MCF 10A (cell line): ENCODE measurements at regions of chr6 and their contacts with region 1.

Region 1: GRCh38 chr6:113858480-113859348 is 1.6 kb downstream of the MARCKS start:
- DNase-seq: peak; percentile 90
- H3K4me3 Mint-ChIP-seq: no peak overlapping the region
- H3K27ac Mint-ChIP-seq: no peak overlapping the region
- H3K4me1 Mint-ChIP-seq: peaks cover 6% of the 10 kb centered on the region
- H3K27me3 Mint-ChIP-seq: no peaks in the 10 kb centered on the region
- CTCF ChIP-seq: peak; percentile 98

Region 2: DNA sequence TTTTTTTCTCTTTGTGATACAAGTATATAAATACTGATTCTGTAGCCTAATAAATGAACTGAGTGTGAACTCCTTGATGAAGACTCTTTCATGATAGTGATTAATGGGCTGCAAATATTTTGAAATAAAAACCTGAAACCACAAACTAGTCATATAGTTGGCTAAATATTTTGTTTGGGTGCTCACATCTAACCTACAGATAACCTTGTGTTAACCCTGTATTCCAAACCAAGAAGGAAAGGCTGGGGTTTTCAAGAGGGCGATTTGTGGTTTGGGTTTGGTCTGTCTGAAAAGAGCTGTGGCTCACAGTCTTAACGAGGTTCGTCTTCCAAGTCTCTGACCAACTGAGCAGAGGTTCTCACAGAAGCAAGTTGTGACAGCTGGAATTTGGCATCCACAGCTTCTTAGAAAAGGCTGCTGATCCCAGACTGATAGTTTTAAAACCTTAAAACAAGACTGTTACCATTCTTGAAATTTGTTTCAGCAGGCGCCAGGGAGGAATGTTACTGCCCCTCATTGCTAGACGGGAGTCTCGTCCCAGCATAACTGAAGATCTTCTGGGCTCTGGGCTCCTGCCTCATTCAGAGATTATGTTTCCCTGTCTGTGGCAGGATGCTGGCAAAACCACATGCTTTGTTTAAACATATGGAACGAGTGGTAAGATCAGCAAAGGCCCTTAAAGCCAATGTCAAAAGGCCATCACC is 738.0 kb before region 1 on chr6:
- CTCF ChIA-PET with region 1: interaction called, 3 read pairs
- POLR2A ChIA-PET with region 1: no interaction called
- intact Hi-C with region 1: loop called (anchors 1 kb)
- DNase-seq: peak; percentile 89
- H3K4me3 Mint-ChIP-seq: peak overlapping the region; percentile 29
- H3K27ac Mint-ChIP-seq: no peak overlapping the region
- H3K4me1 Mint-ChIP-seq: peaks cover 18% of the 10 kb centered on the region
- H3K27me3 Mint-ChIP-seq: no peaks in the 10 kb centered on the region
- CTCF ChIP-seq: no peak

Region 3: DNA sequence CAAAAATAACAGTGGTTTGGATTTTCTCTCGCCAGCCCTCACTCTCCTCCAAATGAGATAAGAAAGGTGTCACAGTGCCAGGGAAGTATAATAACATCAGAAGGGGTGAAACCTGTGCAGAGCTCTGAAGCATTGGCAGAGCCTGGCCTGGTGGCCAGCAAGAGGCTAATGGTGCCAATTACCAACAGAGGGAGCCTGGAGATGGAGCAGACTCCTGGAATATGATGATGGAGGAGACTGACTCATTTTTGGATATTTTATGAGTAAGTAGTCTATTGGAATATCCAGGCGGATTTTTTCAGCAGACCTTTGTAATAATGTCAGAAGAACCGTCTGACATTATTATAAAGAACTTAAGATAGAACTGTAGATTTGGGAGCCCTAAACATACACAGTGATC is 444.2 kb before region 1 on chr6:
- CTCF ChIA-PET with region 1: interaction called, 13 read pairs
- POLR2A ChIA-PET with region 1: interaction called, 16 read pairs
- intact Hi-C with region 1: loop called (anchors 1 kb)
- DNase-seq: peak; percentile 79
- H3K4me3 Mint-ChIP-seq: no peak overlapping the region
- H3K27ac Mint-ChIP-seq: no peak overlapping the region
- H3K4me1 Mint-ChIP-seq: peaks cover 22% of the 10 kb centered on the region
- H3K27me3 Mint-ChIP-seq: no peaks in the 10 kb centered on the region
- CTCF ChIP-seq: peak; percentile 53

Region 4: GRCh38 chr6:113447088-113447831 is 411.5 kb before region 1 on chr6:
- CTCF ChIA-PET with region 1: interaction called, 3 read pairs
- POLR2A ChIA-PET with region 1: interaction called, 16 read pairs
- intact Hi-C with region 1: no loop called
- DNase-seq: peak; percentile 88
- H3K4me3 Mint-ChIP-seq: no peak overlapping the region
- H3K27ac Mint-ChIP-seq: peak overlapping the region; percentile 88
- H3K4me1 Mint-ChIP-seq: peaks cover 41% of the 10 kb centered on the region
- H3K27me3 Mint-ChIP-seq: no peaks in the 10 kb centered on the region
- CTCF ChIP-seq: no peak

Region 5: DNA sequence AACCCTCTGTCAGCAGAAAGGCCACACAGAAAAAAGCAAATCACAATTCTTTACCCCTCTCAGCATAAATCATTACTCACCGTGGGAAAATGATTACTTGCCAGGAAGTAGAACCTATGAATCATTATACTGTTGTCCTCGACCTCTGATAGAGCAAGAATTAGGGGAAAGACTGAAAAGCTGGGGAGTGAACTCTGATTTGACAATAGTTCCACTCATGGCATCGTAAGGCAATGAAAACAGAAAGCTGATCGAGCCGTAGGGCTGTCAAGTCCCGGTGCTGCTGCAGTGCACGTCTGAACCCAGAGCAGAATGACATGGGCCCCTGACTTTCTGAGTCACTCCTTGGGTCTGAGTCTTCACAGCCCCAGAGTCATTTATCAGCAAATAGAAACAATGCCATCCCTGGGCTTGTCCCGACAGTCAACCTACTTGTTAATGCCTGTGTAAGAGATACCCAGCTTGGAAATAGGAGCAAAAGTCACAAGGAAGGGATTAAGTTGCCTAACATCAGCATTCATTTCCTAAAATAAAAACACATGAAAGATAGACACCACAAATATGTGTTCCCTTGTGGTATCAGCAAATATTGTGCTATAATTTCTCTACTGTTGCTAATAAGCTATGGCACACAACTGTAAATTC is 226.4 kb before region 1 on chr6:
- CTCF ChIA-PET with region 1: interaction called, 12 read pairs
- POLR2A ChIA-PET with region 1: interaction called, 38 read pairs
- intact Hi-C with region 1: loop called (anchors 1 kb)
- DNase-seq: peak; percentile 96
- H3K4me3 Mint-ChIP-seq: peak overlapping the region; percentile 62
- H3K27ac Mint-ChIP-seq: peak overlapping the region; percentile 85
- H3K4me1 Mint-ChIP-seq: peaks cover 29% of the 10 kb centered on the region
- H3K27me3 Mint-ChIP-seq: no peaks in the 10 kb centered on the region
- CTCF ChIP-seq: no peak

Region 6: DNA sequence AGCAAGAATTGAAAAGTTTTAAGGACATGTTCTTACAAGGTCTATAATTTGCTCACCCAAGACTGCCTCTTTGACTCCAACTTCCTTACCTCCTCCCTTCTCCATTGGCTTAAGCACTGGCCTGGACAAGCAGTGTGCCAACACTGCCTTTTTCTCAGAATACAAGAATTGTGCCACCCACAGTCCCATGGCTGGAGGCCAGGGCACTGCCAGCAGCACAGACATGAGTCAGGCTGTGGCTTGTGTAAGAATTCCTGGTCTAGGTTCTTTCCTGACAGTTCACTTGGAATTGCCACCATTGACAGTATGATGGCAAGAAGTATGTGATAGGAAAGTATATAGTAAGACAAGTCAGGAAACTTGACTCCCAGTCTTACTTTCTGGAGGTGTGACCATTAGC is 204.3 kb before region 1 on chr6:
- CTCF ChIA-PET with region 1: interaction called, 6 read pairs
- POLR2A ChIA-PET with region 1: interaction called, 13 read pairs
- intact Hi-C with region 1: loop called (anchors 2 kb)
- DNase-seq: peak; percentile 99
- H3K4me3 Mint-ChIP-seq: no peak overlapping the region
- H3K27ac Mint-ChIP-seq: peak overlapping the region; percentile 59
- H3K4me1 Mint-ChIP-seq: peaks cover 25% of the 10 kb centered on the region
- H3K27me3 Mint-ChIP-seq: no peaks in the 10 kb centered on the region
- CTCF ChIP-seq: no peak

Region 7: GRCh38 chr6:113920663-113921267 is 62.1 kb after region 1 on chr6:
- CTCF ChIA-PET with region 1: no interaction called
- POLR2A ChIA-PET with region 1: no interaction called
- intact Hi-C with region 1: no loop called
- DNase-seq: no peak
- H3K4me3 Mint-ChIP-seq: no peak overlapping the region
- H3K27ac Mint-ChIP-seq: no peak overlapping the region
- H3K4me1 Mint-ChIP-seq: no peaks in the 10 kb centered on the region
- H3K27me3 Mint-ChIP-seq: no peaks in the 10 kb centered on the region
- CTCF ChIP-seq: no peak

Region 8: DNA sequence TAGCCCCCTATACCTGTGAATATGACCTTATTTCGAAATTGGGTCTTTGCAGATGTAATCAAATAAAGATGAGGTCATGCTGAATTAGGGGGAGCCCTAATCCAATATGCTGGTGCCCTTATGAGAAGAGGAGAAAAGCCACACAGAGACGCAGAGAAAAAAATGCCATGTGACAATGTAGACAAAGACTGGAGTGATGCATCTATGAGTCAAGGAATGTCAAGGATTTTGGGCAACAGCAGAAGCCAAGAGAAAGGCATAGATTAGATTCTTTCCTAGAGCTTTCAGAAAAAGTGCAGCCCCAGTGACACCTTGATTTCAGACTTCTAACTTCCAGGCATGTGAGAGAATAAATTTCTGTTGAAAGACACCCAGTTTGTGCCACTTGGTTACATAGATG is 531.5 kb after region 1 on chr6:
- CTCF ChIA-PET with region 1: no interaction called
- POLR2A ChIA-PET with region 1: no interaction called
- intact Hi-C with region 1: no loop called
- DNase-seq: no peak
- H3K4me3 Mint-ChIP-seq: no peak overlapping the region
- H3K27ac Mint-ChIP-seq: no peak overlapping the region
- H3K4me1 Mint-ChIP-seq: no peaks in the 10 kb centered on the region
- H3K27me3 Mint-ChIP-seq: peaks cover 65% of the 10 kb centered on the region
- CTCF ChIP-seq: no peak

Region 9: GRCh38 chr6:115570331-115570730 is 1711.6 kb after region 1 on chr6:
- CTCF ChIA-PET with region 1: no interaction called
- POLR2A ChIA-PET with region 1: no interaction called
- intact Hi-C with region 1: no loop called
- DNase-seq: no peak
- H3K4me3 Mint-ChIP-seq: no peak overlapping the region
- H3K27ac Mint-ChIP-seq: no peak overlapping the region
- H3K4me1 Mint-ChIP-seq: no peaks in the 10 kb centered on the region
- H3K27me3 Mint-ChIP-seq: no peaks in the 10 kb centered on the region
- CTCF ChIP-seq: no peak